Heart left ventricle (tissue), 16 donors: ENCODE measurements at regions of chr4 and their contacts with region 1.

Region 1: GRCh38 chr4:77800483-77801259 is 18.5 kb downstream of the CNOT6L start:
- DNase-seq: no peak
- ATAC-seq: peak; percentile 48 to 88 (median 76)
- H3K4me3 ChIP-seq: peak overlapping the region in 3 of 12 donors; percentile 10 to 12 (median 12)
- H3K27ac ChIP-seq: peak overlapping the region in 11 of 12 donors; percentile 20 to 68 (median 55)
- H3K4me1 ChIP-seq: peaks cover 0 to 62% (median 40%) of the 10 kb centered on the region in 12 donors
- H3K27me3 ChIP-seq: no peaks in the 10 kb centered on the region
- CTCF ChIP-seq: no peak
- POLR2A ChIP-seq: no peak

Region 2: DNA sequence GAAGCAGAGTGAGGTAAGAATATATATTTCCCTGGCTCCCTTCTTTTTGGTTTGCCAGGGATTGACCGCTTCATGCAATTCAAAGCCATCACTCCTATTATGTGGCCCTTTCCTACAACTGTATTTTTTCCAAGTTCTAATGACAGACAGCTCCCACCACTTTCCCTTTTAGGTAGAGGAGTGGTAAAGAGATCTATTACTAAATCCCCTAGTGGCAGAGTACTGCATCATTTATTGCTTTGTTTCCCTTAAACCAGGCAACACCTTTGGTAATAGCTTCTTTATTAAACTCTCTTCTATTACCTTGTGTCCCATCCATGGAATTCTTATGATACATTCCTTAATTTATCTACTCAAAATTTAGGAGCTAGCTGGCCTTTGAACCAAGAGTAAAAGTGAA is 72.3 kb before region 1 on chr4:
- intact Hi-C with region 1: no loop called
- DNase-seq: no peak
- ATAC-seq: no peak
- H3K4me3 ChIP-seq: no peak overlapping the region
- H3K27ac ChIP-seq: no peak overlapping the region
- H3K4me1 ChIP-seq: peaks cover 0 to 25% (median 9%) of the 10 kb centered on the region in 12 donors
- H3K27me3 ChIP-seq: no peaks in the 10 kb centered on the region
- CTCF ChIP-seq: peak in 2 of 12 donors; percentile 14 to 20
- POLR2A ChIP-seq: no peak

Region 3: DNA sequence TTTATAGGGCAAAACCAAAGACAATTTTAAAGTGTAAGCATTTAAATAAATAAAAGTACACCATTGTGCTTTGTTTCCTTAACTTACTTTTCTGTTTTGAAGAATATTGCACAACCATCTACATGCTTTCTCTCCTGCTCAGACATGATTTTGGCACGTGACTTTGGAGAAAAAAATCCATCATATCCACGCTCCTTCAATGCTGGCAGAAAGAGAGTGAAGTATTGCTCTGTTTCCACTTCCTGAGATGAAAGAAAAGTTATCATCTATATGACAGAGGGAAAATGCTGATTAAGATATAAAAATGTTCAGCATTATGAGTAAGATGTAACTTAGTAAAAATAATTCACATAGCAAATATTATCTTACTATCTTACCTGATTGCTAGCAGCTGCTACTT is 58.6 kb before region 1 on chr4:
- intact Hi-C with region 1: loop called in 2 of 10 experiments (anchors 10 kb)
- DNase-seq: no peak
- ATAC-seq: no peak
- H3K4me3 ChIP-seq: no peak overlapping the region
- H3K27ac ChIP-seq: no peak overlapping the region
- H3K4me1 ChIP-seq: peaks cover 0 to 2% (median 0%) of the 10 kb centered on the region in 12 donors
- H3K27me3 ChIP-seq: no peaks in the 10 kb centered on the region
- CTCF ChIP-seq: no peak
- POLR2A ChIP-seq: no peak

Region 4: DNA sequence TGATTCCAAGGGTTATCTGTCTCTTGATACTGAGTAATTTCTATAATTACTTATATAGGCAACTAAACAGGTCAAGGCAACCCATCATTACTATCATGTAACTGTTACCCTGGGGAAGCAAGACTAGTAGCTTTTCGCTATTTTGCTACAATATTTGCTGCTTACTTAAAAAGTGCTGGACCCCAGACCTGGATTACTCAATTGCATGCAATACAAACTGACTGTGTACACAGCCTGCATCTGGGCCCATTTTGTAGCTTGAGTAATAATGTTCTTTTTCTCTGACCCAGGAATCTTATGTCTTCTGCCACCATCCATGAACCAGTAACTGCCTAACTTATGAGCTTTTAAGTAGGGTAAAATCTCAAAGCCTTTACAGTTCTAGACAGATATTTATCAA is 35.0 kb before region 1 on chr4:
- intact Hi-C with region 1: loop called in 1 of 10 experiments (anchors 5 kb)
- DNase-seq: no peak
- ATAC-seq: no peak
- H3K4me3 ChIP-seq: no peak overlapping the region
- H3K27ac ChIP-seq: no peak overlapping the region
- H3K4me1 ChIP-seq: no peaks in the 10 kb centered on the region
- H3K27me3 ChIP-seq: no peaks in the 10 kb centered on the region
- CTCF ChIP-seq: no peak
- POLR2A ChIP-seq: no peak